PC-3 (cell line): ENCODE measurements at regions of chr2 and their contacts with region 1.

Region 1: DNA sequence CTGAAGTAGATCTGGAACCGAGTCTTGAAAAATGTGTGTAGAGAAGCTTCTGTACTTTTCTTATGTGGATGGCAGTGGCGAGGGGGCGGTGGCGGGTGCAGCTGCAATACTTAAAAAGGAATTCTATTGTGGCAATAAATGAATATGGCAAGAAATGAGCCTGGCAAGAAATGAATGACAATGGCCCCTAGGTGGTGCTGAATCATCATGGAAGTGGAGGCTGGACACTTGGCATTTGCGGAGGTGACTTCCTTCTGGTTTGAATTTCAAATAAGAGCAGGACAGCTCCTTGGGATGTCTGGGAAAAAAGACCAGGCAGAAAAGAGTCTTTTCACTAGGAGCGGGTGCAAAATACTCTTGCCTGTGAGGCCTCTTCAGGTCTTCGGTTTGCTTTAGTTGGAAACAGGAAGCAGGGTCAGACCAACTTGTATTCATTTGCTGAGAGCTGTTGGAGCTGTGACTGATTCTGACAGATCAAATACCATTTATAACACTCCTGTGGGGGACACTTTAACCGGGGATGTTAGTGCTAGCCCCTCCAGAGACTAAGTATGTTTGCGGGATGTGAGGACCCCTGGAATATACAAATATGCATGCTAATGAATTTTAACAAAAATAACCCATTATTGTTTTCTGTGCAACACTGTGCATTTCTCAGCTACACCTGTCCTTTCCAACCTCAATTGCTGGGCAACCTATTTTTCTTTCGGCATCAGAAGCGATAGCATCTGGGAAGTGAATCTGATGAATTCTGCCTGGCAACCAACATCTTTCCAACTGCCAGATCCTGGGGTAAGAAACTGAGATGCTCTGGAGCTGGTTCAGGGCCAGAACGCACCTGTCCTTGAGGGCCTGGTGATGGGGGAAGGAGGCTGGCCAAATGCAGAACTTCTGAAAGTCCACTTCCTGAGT is 35.4 kb downstream of the FASTKD2 start:
- DNase-seq: peak; percentile 82
- ATAC-seq: peak; percentile 84
- H3K4me3 ChIP-seq: no peak overlapping the region
- H3K27ac ChIP-seq: no peak overlapping the region
- H3K4me1 ChIP-seq: 0 out of 2 replicates have a peak, but pooled peaks cover 6% of the 10 kb centered on the region
- H3K27me3 ChIP-seq: no peaks in the 10 kb centered on the region
- CTCF ChIP-seq: peak; percentile 89

Region 2: GRCh38 chr2:206713746-206714145 is 87.0 kb before region 1 on chr2:
- CTCF ChIA-PET with region 1: no interaction called
- POLR2A ChIA-PET with region 1: no interaction called
- intact Hi-C with region 1: no loop called
- DNase-seq: no peak
- ATAC-seq: no peak
- H3K4me3 ChIP-seq: no peak overlapping the region
- H3K27ac ChIP-seq: no peak overlapping the region
- H3K4me1 ChIP-seq: no peaks in the 10 kb centered on the region
- H3K27me3 ChIP-seq: peaks cover 80% of the 10 kb centered on the region
- CTCF ChIP-seq: no peak

Region 3: DNA sequence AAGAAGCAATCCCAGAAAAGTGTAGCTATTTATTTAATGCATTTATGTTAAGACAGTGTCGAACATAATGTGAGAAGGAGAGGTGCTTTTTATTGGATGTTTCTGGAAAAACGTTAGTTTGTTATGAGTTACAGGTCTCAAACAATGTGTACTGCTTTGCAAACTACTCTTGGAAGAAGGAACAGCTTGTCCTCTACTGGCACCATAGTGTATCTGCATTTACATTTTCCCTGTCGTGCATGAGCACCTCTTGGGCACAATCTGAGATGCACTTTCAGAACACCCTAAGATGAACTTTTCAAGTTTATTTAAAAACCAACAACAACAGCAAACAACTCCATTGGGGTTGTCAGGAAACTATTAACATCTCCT is 933.5 kb after region 1 on chr2:
- CTCF ChIA-PET with region 1: no interaction called
- POLR2A ChIA-PET with region 1: no interaction called
- intact Hi-C with region 1: loop called (anchors 10 kb)
- DNase-seq: peak; percentile 70
- ATAC-seq: peak; percentile 95
- H3K4me3 ChIP-seq: no peak overlapping the region
- H3K27ac ChIP-seq: no peak overlapping the region
- H3K4me1 ChIP-seq: no peaks in the 10 kb centered on the region
- H3K27me3 ChIP-seq: no peaks in the 10 kb centered on the region
- CTCF ChIP-seq: peak; percentile 76